Mammary epithelial cell (primary cell): ENCODE measurements at regions of chr12 and their contacts with region 1.

Region 1: DNA sequence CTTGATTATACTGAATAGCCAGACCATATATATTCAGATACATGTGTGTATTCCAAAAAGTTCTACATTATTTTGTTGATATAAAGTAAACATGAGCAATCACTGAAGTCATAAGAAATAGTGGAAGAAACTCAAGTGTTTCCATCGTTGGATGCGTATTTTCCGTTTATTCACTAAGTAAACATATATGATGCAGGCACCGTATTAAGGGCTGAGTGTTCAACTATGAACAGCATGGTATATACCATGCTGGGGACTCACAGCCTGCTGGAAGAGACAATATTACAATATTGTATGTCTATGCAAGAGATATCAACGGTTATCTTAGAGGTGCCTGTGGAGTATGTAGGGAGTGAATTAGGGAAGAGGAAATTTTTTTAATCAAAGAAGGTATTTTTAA is 1.2 kb downstream of the PYROXD1 start:
- DNase-seq: no peak
- H3K4me3 ChIP-seq: peak overlapping the region; percentile 65 to 100 (median 97)
- H3K27ac ChIP-seq: peak overlapping the region; percentile 90
- H3K4me1 ChIP-seq: peaks cover 5% of the 10 kb centered on the region
- H3K27me3 ChIP-seq: no peaks in the 10 kb centered on the region
- CTCF ChIP-seq: no peak

Region 2: GRCh38 chr12:21296751-21297406 is 141.8 kb before region 1 on chr12:
- CTCF ChIA-PET with region 1: no interaction called
- dilution Hi-C with region 1: no loop called
- in situ Hi-C with region 1: no loop called
- intact Hi-C with region 1: loop called (anchors 10 kb)
- DNase-seq: peak; percentile 6
- H3K4me3 ChIP-seq: no peak overlapping the region
- H3K27ac ChIP-seq: no peak overlapping the region
- H3K4me1 ChIP-seq: no peaks in the 10 kb centered on the region
- H3K27me3 ChIP-seq: no peaks in the 10 kb centered on the region
- CTCF ChIP-seq: peak; percentile 71 to 73

Region 3: DNA sequence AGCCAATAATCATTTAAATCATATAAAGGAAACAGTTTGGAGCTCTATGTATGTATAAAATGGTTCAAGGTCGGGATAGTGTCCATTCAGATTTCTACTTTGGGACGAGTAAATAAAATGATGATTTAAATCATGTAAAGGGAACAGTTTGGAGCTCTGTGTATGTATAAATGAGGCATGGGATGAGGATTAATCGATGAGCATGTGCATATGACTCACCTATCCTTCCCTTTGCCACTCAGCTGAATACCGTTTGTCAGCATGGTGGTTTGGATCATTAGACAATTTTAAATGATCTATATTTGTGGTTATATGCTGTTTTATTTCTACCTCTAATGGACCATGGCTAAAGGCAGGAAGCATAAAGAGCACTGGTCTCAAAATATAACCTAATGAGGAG is 96.9 kb before region 1 on chr12:
- CTCF ChIA-PET with region 1: interaction called, 18 read pairs
- dilution Hi-C with region 1: no loop called
- in situ Hi-C with region 1: no loop called
- intact Hi-C with region 1: no loop called
- DNase-seq: no peak
- H3K4me3 ChIP-seq: no peak overlapping the region
- H3K27ac ChIP-seq: no peak overlapping the region
- H3K4me1 ChIP-seq: no peaks in the 10 kb centered on the region
- H3K27me3 ChIP-seq: no peaks in the 10 kb centered on the region
- CTCF ChIP-seq: no peak

Region 4: DNA sequence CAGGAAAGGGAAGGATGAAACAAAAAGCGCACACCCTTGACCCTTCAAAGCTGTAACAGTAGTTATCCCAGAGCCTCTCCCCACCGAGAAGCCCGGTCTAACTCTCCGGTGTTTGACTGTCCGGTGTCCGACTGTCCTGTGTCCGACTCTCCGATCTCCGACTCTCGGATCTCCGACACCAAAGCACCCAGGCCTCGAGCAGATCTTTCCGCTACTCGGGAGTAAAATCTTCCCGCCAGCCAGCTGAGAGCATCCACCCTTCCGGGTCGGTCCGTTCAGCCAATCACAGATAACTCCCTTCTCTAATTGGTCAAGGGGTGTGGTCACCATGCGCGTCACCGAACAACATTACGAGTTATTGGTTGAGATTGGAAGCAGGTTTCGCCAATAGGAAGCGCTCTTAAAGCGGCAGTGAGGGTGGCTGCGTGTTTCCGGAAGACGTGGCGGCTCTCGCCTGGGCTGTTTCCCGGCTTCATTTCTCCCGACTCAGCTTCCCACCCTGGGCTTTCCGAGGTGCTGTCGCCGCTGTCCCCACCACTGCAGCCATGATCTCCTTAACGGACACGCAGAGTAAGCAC is 62.8 kb after region 1 on chr12 and contains the starts of genes GOLT1B and RECQL:
- CTCF ChIA-PET with region 1: no interaction called
- dilution Hi-C with region 1: no loop called
- in situ Hi-C with region 1: no loop called
- intact Hi-C with region 1: loop called (anchors 2 kb)
- DNase-seq: peak; percentile 97
- H3K4me3 ChIP-seq: peak within 1 kb of the TSS; percentile 81 to 96 (median 90)
- H3K27ac ChIP-seq: peak within 1 kb of the TSS; percentile 78
- H3K4me1 ChIP-seq: peaks cover 16% of the 10 kb centered on the region
- H3K27me3 ChIP-seq: no peaks in the 10 kb centered on the region
- CTCF ChIP-seq: no peak
- total RNA-seq, gene GOLT1B: 38.2 to 46.7 TPM
- total RNA-seq, gene RECQL: 55.3 to 57.9 TPM

Region 5: DNA sequence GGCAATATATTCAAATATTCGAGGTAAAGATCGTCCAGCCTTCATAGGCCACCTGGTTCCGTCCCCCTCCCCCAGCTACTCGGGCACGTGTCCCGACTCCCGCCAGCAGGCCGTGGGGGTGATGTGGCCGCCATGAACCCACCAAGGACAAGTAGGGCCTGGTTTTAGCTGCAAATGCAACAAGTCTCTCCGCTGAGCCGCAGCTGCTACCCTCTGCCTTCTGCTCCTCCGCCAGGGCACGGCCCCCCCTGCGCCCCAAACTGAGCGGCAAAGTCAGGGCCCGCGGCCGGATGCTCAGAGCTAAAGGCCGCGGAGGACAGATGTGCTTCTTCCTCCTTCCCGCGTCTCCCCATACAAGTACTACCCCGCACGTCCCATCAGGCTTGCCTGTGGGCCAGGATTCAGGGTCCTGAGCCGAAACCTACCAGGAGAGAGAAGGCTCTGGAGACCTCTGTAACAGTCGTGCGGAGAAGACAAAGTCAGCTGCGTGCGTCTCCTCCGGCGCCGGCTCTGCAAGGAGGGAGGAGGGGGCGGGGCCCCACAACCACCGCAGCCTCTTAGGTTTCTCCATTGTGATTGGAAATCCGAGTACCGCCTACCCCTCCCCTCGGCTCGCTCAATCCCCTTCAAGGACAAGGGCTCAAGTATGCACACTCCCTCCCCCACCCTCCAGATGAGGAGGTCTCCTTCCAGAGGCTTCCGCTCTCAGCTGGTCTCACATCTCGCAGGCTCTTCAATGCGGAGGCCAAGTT is 218.9 kb after region 1 on chr12 and contains the start of gene LDHB:
- CTCF ChIA-PET with region 1: no interaction called
- dilution Hi-C with region 1: no loop called
- in situ Hi-C with region 1: no loop called
- intact Hi-C with region 1: loop called (anchors 10 kb)
- DNase-seq: peak; percentile 83
- H3K4me3 ChIP-seq: peak within 1 kb of the TSS; percentile 86 to 97 (median 96)
- H3K27ac ChIP-seq: peak within 1 kb of the TSS; percentile 69
- H3K4me1 ChIP-seq: peaks cover 6% of the 10 kb centered on the region
- H3K27me3 ChIP-seq: no peaks in the 10 kb centered on the region
- CTCF ChIP-seq: no peak
- total RNA-seq, gene LDHB: 257 to 513 TPM

Region 6: DNA sequence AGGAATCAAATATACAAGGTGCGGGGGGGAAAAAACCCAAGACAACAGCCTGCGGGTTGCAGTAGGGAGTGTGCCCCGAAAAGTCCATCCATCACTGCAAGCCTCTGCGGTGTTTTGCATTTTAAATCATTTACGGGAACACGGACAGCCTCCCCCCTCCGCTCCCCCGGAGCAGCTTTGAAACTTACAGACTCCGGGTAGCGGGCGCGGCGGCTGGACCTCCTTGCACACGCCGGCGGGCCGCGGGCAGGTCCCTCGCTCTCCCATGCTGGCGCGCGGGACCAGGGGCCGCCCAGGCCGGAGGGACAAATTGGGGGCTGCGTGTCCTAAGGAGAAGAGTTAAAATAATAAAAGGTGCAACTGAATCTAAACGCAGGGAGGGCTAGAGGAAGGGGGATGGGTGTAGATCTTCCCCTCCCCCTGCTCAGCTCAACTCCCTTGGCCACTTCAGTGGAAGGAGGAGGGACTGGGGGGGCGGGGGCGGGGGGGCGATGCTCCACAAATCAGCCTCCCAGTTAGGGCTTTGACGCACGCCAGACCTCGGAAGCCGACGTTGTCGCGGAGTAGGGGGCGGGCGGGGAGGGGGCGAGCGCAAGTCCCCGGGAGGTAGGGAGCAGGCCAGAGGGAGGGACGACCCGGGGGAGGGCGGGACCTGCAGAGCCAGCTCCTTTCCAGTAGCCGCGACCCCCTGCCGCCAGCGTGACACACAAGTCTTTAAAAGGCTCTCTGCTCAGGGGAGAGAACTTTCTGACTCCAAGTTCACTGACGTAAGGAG is 335.9 kb after region 1 on chr12 and contains the start of gene KCNJ8:
- CTCF ChIA-PET with region 1: no interaction called
- dilution Hi-C with region 1: no loop called
- in situ Hi-C with region 1: no loop called
- intact Hi-C with region 1: no loop called
- DNase-seq: no peak
- H3K4me3 ChIP-seq: no peak within 1 kb of the TSS
- H3K27ac ChIP-seq: no peak within 1 kb of the TSS
- H3K4me1 ChIP-seq: no peaks in the 10 kb centered on the region
- H3K27me3 ChIP-seq: peaks cover 16% of the 10 kb centered on the region
- CTCF ChIP-seq: no peak
- total RNA-seq, gene KCNJ8: not detected